Endothelial cell of umbilical vein (primary cell): ENCODE measurements at regions of chr1 and their contacts with region 1.

Region 1: DNA sequence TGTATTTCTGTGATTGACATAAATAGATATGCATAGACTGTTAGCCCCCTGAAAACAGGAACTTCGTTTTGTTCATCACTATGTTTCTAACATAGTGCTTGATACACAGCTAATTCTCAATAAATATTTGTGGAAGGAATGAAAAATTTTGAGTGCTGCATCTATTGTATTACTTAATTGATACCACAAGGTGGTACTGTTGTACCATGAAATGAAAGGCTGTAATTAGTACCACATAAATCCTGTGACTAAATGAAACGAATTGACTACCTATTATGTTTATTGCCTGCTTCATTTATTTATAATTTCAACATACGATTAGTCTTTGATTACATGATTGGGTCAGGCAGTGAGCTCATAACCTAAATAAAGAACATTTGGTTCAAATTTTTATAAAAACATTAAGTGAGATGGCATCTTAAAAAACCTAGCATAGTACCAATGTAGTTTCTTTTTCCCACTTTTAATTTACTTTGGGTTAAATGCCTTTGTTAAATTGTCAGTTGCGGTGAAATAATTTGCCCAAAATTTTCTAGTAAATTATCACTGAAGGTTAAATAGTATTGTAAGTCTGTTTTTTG is 15.0 kb upstream of the TGFB2 start:
- DNase-seq: peak; percentile 64
- H3K4me3 ChIP-seq: no peak overlapping the region
- H3K27ac ChIP-seq: no peak overlapping the region
- H3K4me1 ChIP-seq: peaks cover 2% of the 10 kb centered on the region
- H3K27me3 ChIP-seq: no peaks in the 10 kb centered on the region
- CTCF ChIP-seq: peak; percentile 20 to 32
- POLR2A ChIP-seq: no peak

Region 2: DNA sequence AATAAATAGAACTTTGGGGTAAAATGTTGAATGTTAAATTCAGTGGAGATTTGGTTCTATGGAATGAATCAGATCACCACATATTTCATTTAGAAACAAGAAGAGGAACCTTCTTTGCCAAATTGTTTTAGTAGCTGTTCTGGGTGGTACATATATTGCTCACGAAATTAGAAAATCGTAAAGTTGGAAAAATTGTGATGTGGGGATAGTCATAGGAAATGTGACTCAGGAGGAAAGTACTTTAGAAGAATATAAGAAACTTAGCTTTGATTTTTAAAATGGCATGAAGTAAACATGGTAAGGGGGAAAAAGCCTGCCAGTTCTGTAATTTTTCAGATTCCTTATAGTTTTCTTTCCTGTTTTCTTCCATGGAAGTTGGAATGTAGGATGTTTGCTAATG is 17.6 kb before region 1 on chr1:
- CTCF ChIA-PET with region 1: interaction called, 18 read pairs
- POLR2A ChIA-PET with region 1: no interaction called
- dilution Hi-C with region 1: no loop called
- intact Hi-C with region 1: no loop called
- DNase-seq: peak; percentile 74
- H3K4me3 ChIP-seq: peak overlapping the region in 1 of 3 experiments; percentile 76
- H3K27ac ChIP-seq: peak overlapping the region; percentile 84
- H3K4me1 ChIP-seq: peaks cover 20% of the 10 kb centered on the region
- H3K27me3 ChIP-seq: no peaks in the 10 kb centered on the region
- CTCF ChIP-seq: no peak
- POLR2A ChIP-seq: no peak

Region 3: GRCh38 chr1:218817691-218818465 is 487.7 kb after region 1 on chr1:
- CTCF ChIA-PET with region 1: no interaction called
- POLR2A ChIA-PET with region 1: no interaction called
- dilution Hi-C with region 1: no loop called
- intact Hi-C with region 1: loop called (anchors 10 kb)
- DNase-seq: no peak
- H3K4me3 ChIP-seq: no peak overlapping the region
- H3K27ac ChIP-seq: no peak overlapping the region
- H3K4me1 ChIP-seq: no peaks in the 10 kb centered on the region
- H3K27me3 ChIP-seq: no peaks in the 10 kb centered on the region
- CTCF ChIP-seq: no peak
- POLR2A ChIP-seq: no peak

Region 4: DNA sequence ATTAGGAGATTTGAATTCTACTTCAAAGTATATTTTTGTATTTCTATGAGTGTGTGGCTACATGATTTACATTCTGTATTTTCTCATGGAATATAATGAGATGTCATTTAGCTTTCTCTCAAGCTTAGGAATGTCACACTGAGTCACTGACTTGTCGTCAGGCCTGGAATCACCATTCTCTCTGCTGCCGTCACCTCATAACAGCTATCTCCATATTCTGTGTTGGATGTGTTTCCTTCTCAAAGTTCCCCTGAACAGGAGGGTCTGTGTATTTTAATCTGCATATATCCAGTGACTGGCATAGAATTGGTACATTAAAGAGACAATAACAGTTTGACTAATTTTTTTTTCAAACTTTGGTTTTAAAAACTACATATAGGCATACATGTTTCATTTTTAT is 879.4 kb after region 1 on chr1:
- CTCF ChIA-PET with region 1: interaction called, 3 read pairs
- POLR2A ChIA-PET with region 1: no interaction called
- dilution Hi-C with region 1: no loop called
- intact Hi-C with region 1: loop called (anchors 2 kb)
- DNase-seq: no peak
- H3K4me3 ChIP-seq: no peak overlapping the region
- H3K27ac ChIP-seq: no peak overlapping the region
- H3K4me1 ChIP-seq: no peaks in the 10 kb centered on the region
- H3K27me3 ChIP-seq: no peaks in the 10 kb centered on the region
- CTCF ChIP-seq: no peak
- POLR2A ChIP-seq: no peak

Region 5: GRCh38 chr1:219385786-219386427 is 1055.8 kb after region 1 on chr1:
- CTCF ChIA-PET with region 1: interaction called, 9 read pairs
- POLR2A ChIA-PET with region 1: no interaction called
- dilution Hi-C with region 1: no loop called
- intact Hi-C with region 1: loop called (anchors 1 kb)
- DNase-seq: peak; percentile 66
- H3K4me3 ChIP-seq: no peak overlapping the region
- H3K27ac ChIP-seq: no peak overlapping the region
- H3K4me1 ChIP-seq: no peaks in the 10 kb centered on the region
- H3K27me3 ChIP-seq: no peaks in the 10 kb centered on the region
- CTCF ChIP-seq: peak; percentile 70 to 81
- POLR2A ChIP-seq: no peak

Region 6: GRCh38 chr1:219566951-219567947 is 1237.1 kb after region 1 on chr1:
- CTCF ChIA-PET with region 1: interaction called, 42 read pairs
- POLR2A ChIA-PET with region 1: no interaction called
- dilution Hi-C with region 1: no loop called
- intact Hi-C with region 1: loop called (anchors 2 kb)
- DNase-seq: peak; percentile 45
- H3K4me3 ChIP-seq: no peak overlapping the region
- H3K27ac ChIP-seq: no peak overlapping the region
- H3K4me1 ChIP-seq: no peaks in the 10 kb centered on the region
- H3K27me3 ChIP-seq: peaks cover 0 to 3% of the 10 kb centered on the region in 2 experiments
- CTCF ChIP-seq: peak; percentile 19 to 32
- POLR2A ChIP-seq: no peak

Region 7: GRCh38 chr1:219812491-219813203 is 1482.5 kb after region 1 on chr1:
- CTCF ChIA-PET with region 1: interaction called, 21 read pairs
- POLR2A ChIA-PET with region 1: no interaction called
- dilution Hi-C with region 1: no loop called
- intact Hi-C with region 1: no loop called
- DNase-seq: peak; percentile 26
- H3K4me3 ChIP-seq: no peak overlapping the region
- H3K27ac ChIP-seq: no peak overlapping the region
- H3K4me1 ChIP-seq: no peaks in the 10 kb centered on the region
- H3K27me3 ChIP-seq: peaks cover 0 to 6% of the 10 kb centered on the region in 2 experiments
- CTCF ChIP-seq: peak; percentile 49 to 57
- POLR2A ChIP-seq: no peak